H1 (cell line): ENCODE measurements at regions of chr22 and their contacts with region 1.

Region 1: GRCh38 chr22:39532215-39533071 is at the start of gene RPS19BP1:
- DNase-seq: peak; percentile 94 to 100
- H3K4me3 ChIP-seq: peak within 1 kb of the TSS; percentile 73 to 97 (median 96)
- H3K27ac ChIP-seq: peak within 1 kb of the TSS; percentile 67
- H3K4me1 ChIP-seq: peaks cover 12 to 45% (median 25%) of the 10 kb centered on the region in 4 experiments
- H3K27me3 ChIP-seq: no peaks in the 10 kb centered on the region
- CTCF ChIP-seq: no peak
- EP300 ChIP-seq: 0 out of 3 replicates have a peak, but pooled peaks of 1 of the 2 experiments have one; percentile 20
- POLR2A ChIP-seq: peak in 1 of 2 experiments; percentile 77; a peak in 2 of 3 replicates
- RAD21 ChIP-seq: no peak
- total RNA-seq, gene RPS19BP1: 77.5 and 77.9 TPM in 2 replicates

Region 2: DNA sequence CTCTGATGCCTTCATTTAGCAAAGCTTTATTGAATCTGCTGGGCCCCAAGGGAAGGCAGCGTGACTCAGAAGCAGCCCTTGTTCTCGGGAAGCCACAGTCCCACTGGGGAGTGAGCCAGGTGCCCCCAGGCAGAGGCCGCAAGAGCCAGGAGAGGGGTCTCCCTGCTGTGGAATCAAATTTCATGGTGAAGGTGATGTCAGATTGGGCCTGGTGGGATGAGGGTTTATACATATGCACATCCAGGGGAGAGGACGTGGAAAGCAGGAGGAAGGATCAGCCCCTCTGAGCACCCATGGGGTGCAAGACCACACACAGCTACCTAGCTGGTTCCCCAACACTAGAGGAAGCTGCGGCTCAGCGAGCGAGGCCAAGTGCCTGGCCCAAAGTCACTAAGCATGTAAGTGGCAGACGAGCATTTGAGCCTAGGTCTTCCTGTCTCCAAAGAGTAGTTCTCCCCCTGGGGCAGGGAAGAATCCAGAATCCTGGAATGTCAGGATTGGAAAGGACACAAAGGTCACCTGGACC is 180.7 kb before region 1 on chr22:
- CTCF ChIA-PET with region 1: no interaction called
- POLR2A ChIA-PET with region 1: no interaction called
- DNase-seq: no peak
- H3K4me3 ChIP-seq: peak overlapping the region in 1 of 4 experiments; percentile 93; a peak in 1 of 8 replicates
- H3K27ac ChIP-seq: no peak overlapping the region
- H3K4me1 ChIP-seq: peaks cover 5 to 29% (median 19%) of the 10 kb centered on the region in 4 experiments
- H3K27me3 ChIP-seq: peaks cover 0 to 4% (median 4%) of the 10 kb centered on the region in 4 experiments; a peak in 2 of 7 replicates
- CTCF ChIP-seq: no peak
- EP300 ChIP-seq: no peak
- POLR2A ChIP-seq: no peak
- RAD21 ChIP-seq: no peak; a peak in 1 of 4 replicates

Region 3: DNA sequence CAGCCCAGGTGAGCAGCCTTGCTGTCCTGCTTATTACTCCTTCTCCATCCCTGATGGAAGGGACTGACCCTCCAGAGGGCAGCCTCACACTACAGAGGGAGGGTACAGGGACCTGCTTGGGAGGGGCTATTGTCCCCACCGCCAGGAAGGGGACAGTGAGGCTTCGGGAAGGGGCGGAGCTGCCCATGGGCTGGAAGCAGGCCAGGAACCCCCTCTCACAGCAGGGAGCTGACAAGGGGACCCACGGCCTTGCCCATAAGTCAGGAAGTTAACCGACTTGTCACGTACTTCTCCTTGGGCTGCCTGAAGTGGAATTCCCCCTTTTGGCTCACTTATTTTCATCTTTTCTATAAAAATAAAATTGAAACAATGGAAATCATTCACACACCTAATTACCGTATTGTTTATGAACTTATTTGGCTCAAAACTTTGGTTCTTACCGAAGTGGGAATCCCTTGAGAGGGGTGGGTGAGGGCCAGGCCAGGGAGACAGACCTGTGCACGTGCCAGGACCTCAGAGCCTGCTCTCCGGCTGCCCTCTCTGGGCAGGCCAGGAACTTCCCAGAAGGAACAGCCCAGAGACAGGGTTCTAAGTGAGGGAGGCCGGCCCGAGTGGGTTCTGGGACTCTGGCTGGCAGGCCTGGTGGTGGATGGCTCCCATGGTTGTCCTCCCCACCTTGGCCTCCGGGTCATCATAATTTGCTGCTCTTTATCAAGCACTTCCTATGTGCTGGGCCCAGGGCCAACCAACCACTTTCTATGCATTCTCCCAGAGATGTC is 69.8 kb before region 1 on chr22:
- CTCF ChIA-PET with region 1: interaction called, 22 read pairs
- POLR2A ChIA-PET with region 1: no interaction called
- DNase-seq: no peak
- H3K4me3 ChIP-seq: no peak overlapping the region
- H3K27ac ChIP-seq: no peak overlapping the region
- H3K4me1 ChIP-seq: peaks cover 0 to 5% (median 0%) of the 10 kb centered on the region in 4 experiments; a peak in 3 of 7 replicates
- H3K27me3 ChIP-seq: peaks cover 1 to 10% (median 7%) of the 10 kb centered on the region in 4 experiments; a peak in 6 of 7 replicates
- CTCF ChIP-seq: peak; percentile 38 to 57 (median 52)
- EP300 ChIP-seq: no peak
- POLR2A ChIP-seq: no peak
- RAD21 ChIP-seq: peak; percentile 73 to 77

Region 4: DNA sequence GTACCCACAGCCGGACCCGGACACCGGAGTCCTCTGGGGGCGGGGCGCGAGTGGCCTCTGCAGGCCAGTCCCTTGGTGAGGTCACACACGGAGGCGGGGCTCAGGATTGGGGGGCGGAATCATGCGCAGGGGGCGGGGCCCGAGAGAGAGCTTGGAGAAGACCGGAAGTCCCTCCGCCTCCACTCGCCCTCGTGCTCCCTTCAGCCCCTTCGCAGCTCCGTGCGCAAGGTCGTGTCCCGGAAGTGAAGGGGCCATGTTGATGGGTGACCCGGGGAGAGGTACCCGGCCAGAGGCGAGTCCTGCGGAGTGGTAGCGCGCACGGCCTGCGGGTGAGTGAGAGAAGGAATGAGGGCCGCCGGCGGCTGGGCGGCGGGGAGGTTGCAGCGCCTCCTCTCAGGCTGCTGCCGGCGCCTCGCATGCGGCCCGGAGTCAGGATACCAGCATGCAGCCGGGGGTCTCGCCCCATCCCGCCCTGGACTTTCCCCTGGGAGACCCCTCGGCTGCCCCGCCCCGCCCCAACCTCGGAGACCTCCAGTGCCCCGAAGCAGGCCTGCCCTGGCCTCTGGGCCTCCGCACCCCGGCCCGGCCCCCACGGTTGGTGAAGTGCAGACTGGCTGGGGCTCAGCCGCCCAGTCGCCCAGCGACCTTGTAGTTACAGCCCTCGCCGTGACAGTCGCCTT is 30.2 kb before region 1 on chr22 and contains the start of gene MIEF1:
- CTCF ChIA-PET with region 1: interaction called, 361 read pairs
- POLR2A ChIA-PET with region 1: interaction called, 10 read pairs
- DNase-seq: peak; percentile 88 to 99
- H3K4me3 ChIP-seq: peak within 1 kb of the TSS; percentile 68 to 88 (median 80)
- H3K27ac ChIP-seq: no peak within 1 kb of the TSS
- H3K4me1 ChIP-seq: peaks cover 3 to 9% (median 4%) of the 10 kb centered on the region in 4 experiments; a peak in 6 of 7 replicates
- H3K27me3 ChIP-seq: peaks cover 0 to 56% (median 36%) of the 10 kb centered on the region in 4 experiments; a peak in 6 of 7 replicates
- CTCF ChIP-seq: no peak
- EP300 ChIP-seq: no peak
- POLR2A ChIP-seq: peak in 1 of 2 experiments; percentile 78; a peak in 2 of 3 replicates
- RAD21 ChIP-seq: no peak
- total RNA-seq, gene MIEF1: 31.4 and 32.7 TPM in 2 replicates

Region 5: GRCh38 chr22:39520054-39520891 is 12.2 kb before region 1 on chr22 and contains the start of gene ATF4:
- CTCF ChIA-PET with region 1: interaction called, 150 read pairs
- POLR2A ChIA-PET with region 1: interaction called, 72 read pairs
- DNase-seq: peak; percentile 93 to 96
- H3K4me3 ChIP-seq: peak within 1 kb of the TSS; percentile 93 to 99 (median 95)
- H3K27ac ChIP-seq: peak within 1 kb of the TSS; percentile 99
- H3K4me1 ChIP-seq: peaks cover 0 to 12% (median 5%) of the 10 kb centered on the region in 4 experiments; a peak in 4 of 7 replicates
- H3K27me3 ChIP-seq: peaks cover 0 to 6% (median 2%) of the 10 kb centered on the region in 4 experiments; a peak in 3 of 7 replicates
- CTCF ChIP-seq: no peak
- EP300 ChIP-seq: no peak; a peak in 1 of 3 replicates
- POLR2A ChIP-seq: peak; percentile 96 to 98
- RAD21 ChIP-seq: no peak
- total RNA-seq, gene ATF4: 543 and 553 TPM in 2 replicates

Region 6: GRCh38 chr22:39559454-39560105 is 27.1 kb after region 1 on chr22:
- CTCF ChIA-PET with region 1: interaction called, 17 read pairs
- POLR2A ChIA-PET with region 1: interaction called, 5 read pairs
- DNase-seq: peak; percentile 41 to 86
- H3K4me3 ChIP-seq: peak overlapping the region in 1 of 4 experiments; percentile 19; a peak in 2 of 8 replicates
- H3K27ac ChIP-seq: no peak overlapping the region
- H3K4me1 ChIP-seq: peaks cover 4 to 21% (median 6%) of the 10 kb centered on the region in 4 experiments; a peak in 6 of 7 replicates
- H3K27me3 ChIP-seq: peaks cover 30 to 53% (median 48%) of the 10 kb centered on the region in 4 experiments
- CTCF ChIP-seq: peak; percentile 81 to 87 (median 83)
- EP300 ChIP-seq: no peak
- POLR2A ChIP-seq: no peak
- RAD21 ChIP-seq: peak; percentile 58 to 74

Region 7: DNA sequence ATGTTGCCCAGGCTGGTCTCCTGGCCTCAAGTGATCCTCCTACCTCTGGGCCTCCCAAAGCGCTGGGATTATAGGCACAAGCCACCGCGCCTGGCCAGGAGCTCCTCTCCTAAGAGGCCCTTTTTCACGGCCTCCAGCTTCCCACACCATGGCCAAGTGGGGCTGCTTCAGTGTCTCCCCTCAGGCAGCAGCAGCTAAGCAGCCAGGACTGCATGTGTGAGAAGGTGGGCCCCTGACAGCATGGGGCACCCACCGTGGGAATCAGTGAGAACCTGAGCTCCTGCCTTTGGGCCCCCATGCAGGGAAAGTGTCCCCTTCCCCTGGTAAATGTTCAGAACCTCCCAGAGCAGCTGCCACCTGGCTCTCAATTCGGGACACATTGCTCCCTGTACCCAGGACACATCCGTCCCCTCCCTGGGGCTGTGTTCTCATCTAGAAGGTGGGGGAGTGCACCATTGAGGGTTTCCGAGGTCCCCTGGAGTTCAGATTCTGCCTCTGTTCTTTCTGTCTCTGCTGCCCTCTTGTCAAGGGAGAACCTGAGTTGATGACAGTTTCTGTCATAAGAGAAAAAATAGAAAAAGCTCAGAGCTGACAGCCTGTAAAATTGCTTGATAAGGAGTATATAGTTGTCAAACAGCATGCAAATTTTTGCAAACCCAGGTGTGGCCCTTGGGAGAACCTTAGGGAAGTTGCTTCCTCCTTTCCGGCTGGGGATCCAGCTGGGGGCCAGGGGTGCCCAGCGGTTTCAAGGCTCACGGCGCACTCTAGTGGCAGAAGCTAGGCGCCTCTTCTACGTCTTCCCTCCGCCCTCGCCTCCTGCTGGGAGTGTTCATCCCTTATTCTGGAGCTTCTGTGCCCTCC is 492.0 kb after region 1 on chr22:
- CTCF ChIA-PET with region 1: interaction called, 23 read pairs
- POLR2A ChIA-PET with region 1: no interaction called
- DNase-seq: peak in 1 of 2 experiments; percentile 90
- H3K4me3 ChIP-seq: no peak overlapping the region
- H3K27ac ChIP-seq: peak overlapping the region; percentile 17; the same call in 1 of the 2 replicates
- H3K4me1 ChIP-seq: peaks cover 0 to 3% (median 0%) of the 10 kb centered on the region in 4 experiments; a peak in 3 of 7 replicates
- H3K27me3 ChIP-seq: no peaks in the 10 kb centered on the region
- CTCF ChIP-seq: peak; percentile 89 to 95 (median 90)
- EP300 ChIP-seq: no peak
- POLR2A ChIP-seq: no peak
- RAD21 ChIP-seq: peak; percentile 97 to 98